ENCODE measurements at regions of chr6 and their contacts with region 1.

Region 1: GRCh38 chr6:128350416-128351254 is 169.8 kb downstream of the PTPRK start:
- DNase-seq: no peak
- H3K4me3 Mint-ChIP-seq: no peak overlapping the region
- H3K27ac Mint-ChIP-seq: peak overlapping the region; percentile 20
- H3K4me1 Mint-ChIP-seq: peaks cover 47% of the 10 kb centered on the region
- H3K27me3 Mint-ChIP-seq: no peaks in the 10 kb centered on the region
- CTCF ChIP-seq: no peak

Region 2: GRCh38 chr6:128478230-128479045 is 127.8 kb after region 1 on chr6:
- CTCF ChIA-PET with region 1: no interaction called
- intact Hi-C with region 1: loop called (anchors 5 kb)
- DNase-seq: no peak
- H3K4me3 Mint-ChIP-seq: peak overlapping the region; percentile 47
- H3K27ac Mint-ChIP-seq: peak overlapping the region; percentile 24
- H3K4me1 Mint-ChIP-seq: peaks cover 64% of the 10 kb centered on the region
- H3K27me3 Mint-ChIP-seq: no peaks in the 10 kb centered on the region
- CTCF ChIP-seq: no peak

Measured in Calu3 (cell line).